A549 (cell line): ENCODE measurements at regions of chr15 and their contacts with region 1.

Region 1: GRCh38 chr15:41180206-41180789 is 50.3 kb downstream of the EXD1 start:
- DNase-seq: no peak
- ATAC-seq: no peak
- H3K4me3 ChIP-seq: no peak overlapping the region
- H3K27ac ChIP-seq: no peak overlapping the region
- H3K4me1 ChIP-seq: 0 out of 3 replicates have a peak, but pooled peaks cover 7% of the 10 kb centered on the region
- CTCF ChIP-seq: no peak
- EP300 ChIP-seq: no peak
- POLR2A ChIP-seq: no peak
- RAD21 ChIP-seq: no peak

Region 2: DNA sequence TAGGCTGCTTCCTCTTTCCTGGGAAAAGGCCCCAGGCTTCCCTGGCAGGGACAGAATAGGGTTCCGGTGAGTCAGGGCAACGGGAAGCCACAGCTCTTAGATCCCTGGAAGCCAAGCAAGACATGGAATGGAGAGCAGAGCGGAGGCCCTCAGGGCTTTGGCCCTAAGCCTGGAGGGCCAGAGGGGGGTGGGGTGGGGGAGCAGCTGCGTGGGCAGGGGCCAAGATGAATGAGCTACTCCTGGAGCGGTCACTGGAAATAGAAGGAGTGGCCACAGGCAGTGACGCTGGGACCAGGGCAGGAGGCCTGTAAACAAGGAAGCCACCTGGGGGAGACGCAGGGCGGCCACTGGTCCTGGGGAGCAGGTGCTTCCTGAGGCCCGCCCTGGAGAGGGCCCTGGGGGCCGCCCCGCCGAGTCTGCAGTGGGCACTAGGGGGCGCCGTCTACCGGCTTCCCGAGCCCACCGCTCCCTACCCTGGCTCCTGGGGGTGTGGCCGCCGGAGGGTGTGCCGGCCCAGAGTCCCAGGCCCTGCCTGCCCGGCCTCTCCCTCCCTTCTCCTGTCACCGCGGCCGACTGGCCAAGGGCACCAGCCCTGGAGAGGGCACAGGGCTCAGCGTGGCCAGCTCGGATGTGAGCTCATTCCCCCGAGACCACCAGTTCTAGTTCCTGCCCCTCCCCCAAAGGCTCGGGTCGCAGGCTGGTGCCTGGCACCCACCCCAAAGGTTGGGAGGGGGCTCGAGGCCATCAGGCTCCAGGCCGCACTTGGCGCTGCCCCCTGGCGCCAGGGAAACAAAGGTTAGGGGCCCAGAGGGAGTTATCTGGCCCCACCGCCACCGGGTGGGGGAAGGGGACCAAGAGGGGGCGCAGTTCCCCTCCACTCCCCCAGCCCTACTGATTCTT is 274.0 kb before region 1 on chr15:
- CTCF ChIA-PET with region 1: interaction called, 100 read pairs
- POLR2A ChIA-PET with region 1: no interaction called
- DNase-seq: peak in 1 of 2 experiments; percentile 64
- ATAC-seq: peak; percentile 68 to 90
- H3K4me3 ChIP-seq: peak overlapping the region; percentile 41
- H3K27ac ChIP-seq: peak overlapping the region; percentile 65 to 83
- H3K4me1 ChIP-seq: peaks cover 29% of the 10 kb centered on the region
- CTCF ChIP-seq: peak; percentile 61
- EP300 ChIP-seq: no peak
- POLR2A ChIP-seq: no peak
- RAD21 ChIP-seq: peak; percentile 52 to 65

Region 3: DNA sequence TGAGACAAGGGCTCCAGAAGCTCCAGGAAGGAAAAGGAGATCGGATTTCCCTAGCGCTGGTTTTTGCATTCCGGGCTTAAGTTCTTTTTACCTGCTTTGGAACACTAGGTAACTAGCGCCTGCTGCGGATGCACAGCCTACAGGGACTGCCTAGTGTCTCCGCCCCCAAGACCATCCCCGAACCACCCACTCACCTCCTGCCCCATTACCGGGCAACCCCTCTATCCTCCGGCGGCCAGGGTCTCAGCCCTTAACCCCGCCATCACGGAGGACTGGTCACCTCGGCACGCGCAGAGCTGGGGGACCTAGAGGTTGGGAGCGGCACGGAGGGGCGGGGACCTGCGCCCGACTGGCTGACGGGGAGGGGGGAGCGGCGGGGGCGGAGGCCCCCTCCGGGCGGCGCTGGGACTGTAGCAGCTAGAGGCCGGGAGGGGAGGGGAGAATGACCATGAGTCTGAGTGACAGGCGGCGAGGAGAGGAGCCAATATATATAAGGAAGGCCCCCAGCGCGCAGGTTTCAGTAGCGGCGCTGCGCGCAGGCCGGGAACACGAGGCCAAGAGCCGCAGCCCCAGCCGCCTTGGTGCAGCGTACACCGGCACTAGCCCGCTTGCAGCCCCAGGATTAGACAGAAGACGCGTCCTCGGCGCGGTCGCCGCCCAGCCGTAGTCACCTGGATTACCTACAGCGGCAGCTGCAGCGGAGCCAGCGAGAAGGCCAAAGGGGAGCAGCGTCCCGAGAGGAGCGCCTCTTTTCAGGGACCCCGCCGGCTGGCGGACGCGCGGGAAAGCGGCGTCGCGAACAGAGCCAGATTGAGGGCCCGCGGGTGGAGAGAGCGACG is 251.3 kb before region 1 on chr15 and contains the start of gene DLL4:
- CTCF ChIA-PET with region 1: interaction called, 21 read pairs
- POLR2A ChIA-PET with region 1: interaction called, 3 read pairs
- DNase-seq: peak; percentile 57 to 73
- ATAC-seq: peak; percentile 54 to 74
- H3K4me3 ChIP-seq: peak within 1 kb of the TSS; percentile 48
- H3K27ac ChIP-seq: peak within 1 kb of the TSS in 1 of 2 experiments; percentile 63; a peak in 3 of 6 replicates
- H3K4me1 ChIP-seq: peaks cover 24% of the 10 kb centered on the region; the same call in 1 of the 3 replicates
- CTCF ChIP-seq: no peak
- EP300 ChIP-seq: no peak
- POLR2A ChIP-seq: peak; percentile 70
- RAD21 ChIP-seq: no peak
- polyA plus RNA-seq, gene DLL4: 0.09 and 0.16 TPM in 2 replicates

Region 4: DNA sequence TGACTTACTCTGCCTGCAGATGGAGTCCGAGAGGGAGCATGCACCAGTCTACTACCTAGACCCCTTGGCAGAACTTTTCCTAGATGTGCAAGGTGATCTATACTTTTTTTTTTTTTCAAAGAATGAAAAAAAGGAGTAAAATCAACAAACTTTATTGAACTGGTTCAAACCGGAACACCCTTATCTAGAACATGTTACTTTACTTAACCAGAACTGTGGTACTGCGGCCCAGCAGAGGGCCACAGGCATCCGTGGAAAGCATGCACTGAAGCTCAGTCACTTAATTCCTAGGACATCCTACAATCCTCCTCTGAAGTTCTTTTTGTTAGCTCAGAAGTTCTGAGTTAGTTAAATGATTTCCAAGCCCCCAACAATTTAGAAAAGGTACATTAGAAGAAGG is 205.4 kb before region 1 on chr15:
- CTCF ChIA-PET with region 1: interaction called, 11 read pairs
- POLR2A ChIA-PET with region 1: no interaction called
- DNase-seq: no peak
- ATAC-seq: no peak
- H3K4me3 ChIP-seq: no peak overlapping the region
- H3K27ac ChIP-seq: no peak overlapping the region
- H3K4me1 ChIP-seq: peaks cover 14% of the 10 kb centered on the region; the same call in 2 of the 3 replicates
- CTCF ChIP-seq: no peak
- EP300 ChIP-seq: no peak
- POLR2A ChIP-seq: no peak
- RAD21 ChIP-seq: no peak

Region 5: DNA sequence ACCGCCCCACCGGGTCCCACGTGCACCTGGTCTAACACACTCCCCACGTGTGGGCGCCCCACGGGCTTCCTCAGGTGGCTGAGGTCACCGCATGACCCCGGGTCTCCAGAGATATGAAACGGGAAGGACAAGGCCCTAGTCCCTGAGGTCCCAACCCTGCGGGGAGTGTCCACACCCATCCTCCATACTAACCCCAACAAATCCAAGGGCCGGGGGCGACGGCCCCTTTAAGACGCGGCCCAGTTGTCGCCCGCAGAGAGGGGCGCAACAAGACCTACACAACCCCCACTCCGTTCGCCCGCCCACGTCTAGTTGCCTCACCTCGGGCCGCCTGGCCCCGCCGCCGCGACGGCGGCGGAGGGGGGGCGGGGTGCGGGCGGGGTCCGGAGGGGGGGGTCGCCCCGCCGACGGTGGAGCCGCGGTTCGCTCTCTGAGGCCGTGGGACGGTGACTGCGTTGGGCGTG is 64.6 kb before region 1 on chr15:
- CTCF ChIA-PET with region 1: interaction called, 10 read pairs
- POLR2A ChIA-PET with region 1: no interaction called
- DNase-seq: peak; percentile 30 to 71
- ATAC-seq: peak; percentile 70 to 71
- H3K4me3 ChIP-seq: peak overlapping the region; percentile 82
- H3K27ac ChIP-seq: peak overlapping the region; percentile 100
- H3K4me1 ChIP-seq: peaks cover 10% of the 10 kb centered on the region; the same call in 1 of the 3 replicates
- CTCF ChIP-seq: no peak
- EP300 ChIP-seq: no peak
- POLR2A ChIP-seq: no peak
- RAD21 ChIP-seq: no peak

Region 6: DNA sequence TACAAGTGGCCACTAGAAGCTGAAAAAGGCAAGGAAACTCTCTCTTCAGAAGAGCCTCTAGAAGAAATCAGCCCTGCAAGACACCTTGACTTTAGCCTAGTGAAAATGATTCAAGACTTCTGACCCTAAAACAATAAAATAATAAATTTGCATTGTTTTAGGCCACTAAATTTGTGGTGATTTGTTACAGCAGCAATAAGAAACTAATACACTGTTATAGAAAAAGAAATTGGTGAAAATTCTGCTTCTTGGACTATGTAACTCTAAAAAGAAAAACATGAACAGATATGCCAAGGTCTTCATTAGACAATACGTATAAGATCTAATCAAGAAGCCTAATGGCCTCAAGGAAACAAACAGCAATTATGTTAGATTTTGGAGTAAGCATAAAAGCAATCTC is 14.1 kb after region 1 on chr15:
- CTCF ChIA-PET with region 1: interaction called, 10 read pairs
- POLR2A ChIA-PET with region 1: no interaction called
- DNase-seq: no peak
- ATAC-seq: no peak
- H3K4me3 ChIP-seq: no peak overlapping the region
- H3K27ac ChIP-seq: no peak overlapping the region
- H3K4me1 ChIP-seq: no peaks in the 10 kb centered on the region
- CTCF ChIP-seq: no peak
- EP300 ChIP-seq: no peak
- POLR2A ChIP-seq: no peak
- RAD21 ChIP-seq: no peak

Region 7: GRCh38 chr15:41203395-41203794 is 23.1 kb after region 1 on chr15:
- CTCF ChIA-PET with region 1: interaction called, 11 read pairs
- POLR2A ChIA-PET with region 1: no interaction called
- DNase-seq: no peak
- ATAC-seq: no peak
- H3K4me3 ChIP-seq: no peak overlapping the region
- H3K27ac ChIP-seq: no peak overlapping the region
- H3K4me1 ChIP-seq: no peaks in the 10 kb centered on the region
- CTCF ChIP-seq: no peak
- EP300 ChIP-seq: no peak
- POLR2A ChIP-seq: no peak
- RAD21 ChIP-seq: no peak